MCF 10A (cell line): ENCODE measurements at regions of chr14 and their contacts with region 1.

Region 1: GRCh38 chr14:70073924-70074566 is 114.7 kb downstream of the SLC8A3 start:
- DNase-seq: peak; percentile 86
- H3K4me3 Mint-ChIP-seq: no peak overlapping the region
- H3K27ac Mint-ChIP-seq: no peak overlapping the region
- H3K4me1 Mint-ChIP-seq: no peaks in the 10 kb centered on the region
- H3K27me3 Mint-ChIP-seq: peaks cover 35% of the 10 kb centered on the region
- CTCF ChIP-seq: peak; percentile 92

Region 2: GRCh38 chr14:69879175-69880043 is 194.6 kb before region 1 on chr14 and contains the start of gene SMOC1:
- CTCF ChIA-PET with region 1: interaction called, 3 read pairs
- POLR2A ChIA-PET with region 1: no interaction called
- intact Hi-C with region 1: loop called (anchors 1 kb)
- DNase-seq: peak; percentile 88
- H3K4me3 Mint-ChIP-seq: peak within 1 kb of the TSS; percentile 87
- H3K27ac Mint-ChIP-seq: peak within 1 kb of the TSS; percentile 61
- H3K4me1 Mint-ChIP-seq: peaks cover 40% of the 10 kb centered on the region
- H3K27me3 Mint-ChIP-seq: no peaks in the 10 kb centered on the region
- CTCF ChIP-seq: no peak
- total RNA-seq, gene SMOC1: 22.9 and 23.6 TPM in 2 replicates

Region 3: GRCh38 chr14:70045844-70046535 is 28.1 kb before region 1 on chr14:
- CTCF ChIA-PET with region 1: interaction called, 32 read pairs
- POLR2A ChIA-PET with region 1: interaction called, 3 read pairs
- intact Hi-C with region 1: loop called (anchors 1 kb)
- DNase-seq: peak; percentile 68
- H3K4me3 Mint-ChIP-seq: no peak overlapping the region
- H3K27ac Mint-ChIP-seq: no peak overlapping the region
- H3K4me1 Mint-ChIP-seq: peaks cover 13% of the 10 kb centered on the region
- H3K27me3 Mint-ChIP-seq: peaks cover 13% of the 10 kb centered on the region
- CTCF ChIP-seq: peak; percentile 88

Region 4: GRCh38 chr14:70057519-70058136 is 16.4 kb before region 1 on chr14:
- CTCF ChIA-PET with region 1: interaction called, 25 read pairs
- POLR2A ChIA-PET with region 1: no interaction called
- intact Hi-C with region 1: no loop called
- DNase-seq: no peak
- H3K4me3 Mint-ChIP-seq: no peak overlapping the region
- H3K27ac Mint-ChIP-seq: no peak overlapping the region
- H3K4me1 Mint-ChIP-seq: peaks cover 10% of the 10 kb centered on the region
- H3K27me3 Mint-ChIP-seq: peaks cover 48% of the 10 kb centered on the region
- CTCF ChIP-seq: no peak

Region 5: GRCh38 chr14:70086685-70087379 is 12.8 kb after region 1 on chr14:
- CTCF ChIA-PET with region 1: interaction called, 11 read pairs
- POLR2A ChIA-PET with region 1: interaction called, 3 read pairs
- intact Hi-C with region 1: no loop called
- DNase-seq: peak; percentile 51
- H3K4me3 Mint-ChIP-seq: no peak overlapping the region
- H3K27ac Mint-ChIP-seq: no peak overlapping the region
- H3K4me1 Mint-ChIP-seq: no peaks in the 10 kb centered on the region
- H3K27me3 Mint-ChIP-seq: peaks cover 39% of the 10 kb centered on the region
- CTCF ChIP-seq: peak; percentile 63

Region 6: DNA sequence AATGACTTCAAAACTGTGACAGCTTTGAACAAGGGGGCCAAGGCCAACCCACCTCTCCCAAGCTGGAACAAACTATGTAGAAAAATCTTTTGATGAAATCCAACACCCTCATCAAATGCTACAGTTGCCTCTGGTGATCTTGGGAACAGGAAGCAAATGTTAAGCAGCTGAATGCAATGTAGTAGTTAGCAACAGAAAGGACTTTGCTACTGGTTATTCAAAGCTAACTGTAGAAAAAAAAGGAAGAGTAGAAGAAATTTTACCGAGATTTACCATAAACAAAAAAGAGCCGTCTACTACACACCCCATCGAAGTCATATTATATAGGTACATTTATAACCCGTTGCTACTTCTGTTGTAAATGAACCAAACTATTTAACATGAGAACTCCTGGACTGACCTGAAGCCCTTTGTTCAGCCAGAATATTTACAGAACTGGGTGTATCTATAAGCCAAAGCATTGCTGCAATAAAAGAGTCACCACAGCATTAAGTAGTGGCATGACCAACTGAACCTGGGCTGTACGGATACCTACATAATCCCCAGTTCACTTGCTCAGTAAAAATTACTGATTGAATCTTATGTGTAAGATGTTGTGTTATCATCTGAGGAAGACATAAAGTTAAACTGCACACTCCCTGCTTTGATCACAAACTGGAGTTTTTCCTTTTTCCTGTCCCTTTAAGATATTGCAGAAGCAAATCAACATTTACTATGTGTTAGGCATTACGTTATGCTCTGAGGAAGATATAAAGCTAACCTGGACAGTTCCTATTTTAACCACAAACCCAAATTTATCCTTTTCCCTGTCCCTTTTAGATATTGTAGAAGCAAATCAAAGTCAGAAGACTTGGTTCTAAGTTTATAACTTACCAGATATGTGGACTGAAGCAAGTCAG is 317.7 kb after region 1 on chr14:
- CTCF ChIA-PET with region 1: no interaction called
- POLR2A ChIA-PET with region 1: no interaction called
- intact Hi-C with region 1: no loop called
- DNase-seq: no peak
- H3K4me3 Mint-ChIP-seq: no peak overlapping the region
- H3K27ac Mint-ChIP-seq: no peak overlapping the region
- H3K4me1 Mint-ChIP-seq: no peaks in the 10 kb centered on the region
- H3K27me3 Mint-ChIP-seq: no peaks in the 10 kb centered on the region
- CTCF ChIP-seq: no peak